ENCODE measurements at regions of chr5 and their contacts with region 1.

Region 1: GRCh38 chr5:109589986-109590385 is 99.7 kb upstream of the MAN2A1 start:
- DNase-seq: peak in 4 of 5 donors; percentile 10 to 24 (median 20)
- H3K4me3 ChIP-seq: no peak overlapping the region
- H3K4me3 Mint-ChIP-seq: no peak overlapping the region
- H3K27ac ChIP-seq: no peak overlapping the region
- H3K27ac Mint-ChIP-seq: no peak overlapping the region
- H3K4me1 ChIP-seq: no peaks in the 10 kb centered on the region
- H3K4me1 Mint-ChIP-seq: no peaks in the 10 kb centered on the region
- H3K27me3 ChIP-seq: no peaks in the 10 kb centered on the region
- H3K27me3 Mint-ChIP-seq: no peaks in the 10 kb centered on the region

Region 2: DNA sequence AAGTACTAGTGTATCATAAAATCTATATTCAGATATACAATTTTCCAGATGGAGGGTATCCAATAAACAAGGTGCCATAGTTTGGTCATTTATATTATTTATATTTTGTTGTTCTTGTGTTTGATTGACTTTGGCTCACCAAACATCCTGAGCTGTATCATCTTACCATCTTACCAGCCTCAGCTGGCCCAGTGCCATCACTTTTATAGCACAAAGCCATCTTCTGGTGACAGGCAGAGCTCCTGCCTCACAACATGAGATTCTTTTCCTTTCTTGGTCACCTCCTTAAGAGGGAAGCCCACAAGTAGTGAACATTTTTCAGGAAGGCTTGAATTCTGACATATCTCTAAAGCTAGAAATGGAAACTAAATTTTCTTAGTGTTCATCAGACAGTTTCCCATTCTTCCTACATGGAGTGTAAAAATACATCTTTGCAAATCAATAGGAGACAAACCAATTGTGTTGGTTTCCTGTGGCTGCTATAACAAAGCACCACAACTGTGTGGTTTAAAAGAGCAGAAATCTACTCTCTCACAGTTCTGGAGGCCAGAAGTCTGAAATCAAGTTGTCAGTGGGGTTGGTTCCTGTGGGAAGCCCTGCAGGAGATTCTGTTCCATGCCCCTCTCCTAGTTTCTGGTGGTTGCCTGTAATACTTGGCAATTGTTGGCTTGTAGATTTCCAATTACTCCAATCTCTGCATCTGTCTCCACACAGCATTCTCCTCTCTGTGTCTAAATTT is 441.6 kb after region 1 on chr5:
- CTCF ChIA-PET with region 1: no interaction called
- POLR2A ChIA-PET with region 1: no interaction called
- intact Hi-C with region 1: loop called (anchors 10 kb)
- DNase-seq: peak in 4 of 5 donors; percentile 26 to 33 (median 30)
- H3K4me3 ChIP-seq: no peak overlapping the region
- H3K4me3 Mint-ChIP-seq: peak overlapping the region in 2 of 8 donors; percentile 18 to 27
- H3K27ac ChIP-seq: no peak overlapping the region
- H3K27ac Mint-ChIP-seq: peak overlapping the region in 3 of 7 donors; percentile 3 to 49 (median 29)
- H3K4me1 ChIP-seq: peaks cover 17% of the 10 kb centered on the region
- H3K4me1 Mint-ChIP-seq: peaks cover 15 to 29% (median 22%) of the 10 kb centered on the region in 4 donors
- H3K27me3 ChIP-seq: no peaks in the 10 kb centered on the region
- H3K27me3 Mint-ChIP-seq: no peaks in the 10 kb centered on the region

Region 3: DNA sequence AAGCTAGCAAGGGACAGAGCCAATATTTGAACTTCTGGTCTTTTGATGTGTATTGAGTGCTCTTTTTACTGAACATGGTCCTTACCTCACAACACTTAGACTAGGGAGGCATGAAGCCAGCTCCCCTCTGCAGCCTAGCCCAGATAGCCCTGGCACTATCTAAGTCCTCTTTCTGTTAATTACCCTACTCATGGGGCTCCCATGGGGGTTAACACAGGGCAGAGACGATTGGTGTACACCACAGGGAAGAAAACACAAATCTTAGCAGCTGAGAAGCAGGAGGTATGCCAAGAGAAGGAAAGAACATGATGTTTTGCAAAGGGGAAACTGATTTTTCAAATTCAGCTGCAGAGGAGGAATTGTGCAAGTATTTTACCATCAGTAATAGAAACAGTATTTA is 752.7 kb after region 1 on chr5:
- CTCF ChIA-PET with region 1: no interaction called
- POLR2A ChIA-PET with region 1: no interaction called
- intact Hi-C with region 1: loop called (anchors 10 kb)
- DNase-seq: no peak
- H3K4me3 ChIP-seq: no peak overlapping the region
- H3K4me3 Mint-ChIP-seq: no peak overlapping the region
- H3K27ac ChIP-seq: no peak overlapping the region
- H3K27ac Mint-ChIP-seq: no peak overlapping the region
- H3K4me1 ChIP-seq: no peaks in the 10 kb centered on the region
- H3K4me1 Mint-ChIP-seq: no peaks in the 10 kb centered on the region
- H3K27me3 ChIP-seq: no peaks in the 10 kb centered on the region
- H3K27me3 Mint-ChIP-seq: no peaks in the 10 kb centered on the region

Region 4: GRCh38 chr5:110590187-110590586 is 1000.2 kb after region 1 on chr5:
- CTCF ChIA-PET with region 1: interaction called, 3 read pairs
- POLR2A ChIA-PET with region 1: no interaction called
- intact Hi-C with region 1: loop called (anchors 1 kb)
- DNase-seq: peak in 1 of 5 donors; percentile 1
- H3K4me3 ChIP-seq: no peak overlapping the region
- H3K4me3 Mint-ChIP-seq: no peak overlapping the region
- H3K27ac ChIP-seq: no peak overlapping the region
- H3K27ac Mint-ChIP-seq: no peak overlapping the region
- H3K4me1 ChIP-seq: no peaks in the 10 kb centered on the region
- H3K4me1 Mint-ChIP-seq: no peaks in the 10 kb centered on the region
- H3K27me3 ChIP-seq: no peaks in the 10 kb centered on the region
- H3K27me3 Mint-ChIP-seq: peaks cover 1 to 4% of the 10 kb centered on the region in 2 donors

Measured in CD4-positive, alpha-beta memory T cell (primary cell).